Breast epithelium (tissue), 4 donors: ENCODE measurements at regions of chr1 and their contacts with region 1.

Region 1: GRCh38 chr1:9494929-9495758 is 44.1 kb upstream of the SLC25A33 start:
- DNase-seq: peak in 1 of 2 donors; percentile 61
- H3K4me3 ChIP-seq: peak overlapping the region in 2 of 3 donors; percentile 33 to 56
- H3K27ac ChIP-seq: no peak overlapping the region
- H3K4me1 ChIP-seq: peaks cover 0 to 3% of the 10 kb centered on the region in 2 donors
- H3K27me3 ChIP-seq: no peaks in the 10 kb centered on the region
- CTCF ChIP-seq: peak; percentile 92 to 97 (median 94)
- POLR2A ChIP-seq: no peak

Region 2: GRCh38 chr1:9289090-9289534 is 206.0 kb before region 1 on chr1:
- intact Hi-C with region 1: loop called (anchors 10 kb)
- DNase-seq: peak; percentile 70 to 80
- H3K4me3 ChIP-seq: no peak overlapping the region
- H3K27ac ChIP-seq: peak overlapping the region; percentile 16 to 43
- H3K4me1 ChIP-seq: peaks cover 0 to 3% of the 10 kb centered on the region in 2 donors
- H3K27me3 ChIP-seq: no peaks in the 10 kb centered on the region
- CTCF ChIP-seq: peak; percentile 95 to 96 (median 96)
- POLR2A ChIP-seq: no peak

Region 3: GRCh38 chr1:9529190-9529589 is 34.0 kb after region 1 on chr1:
- intact Hi-C with region 1: no loop called
- DNase-seq: no peak
- H3K4me3 ChIP-seq: no peak overlapping the region
- H3K27ac ChIP-seq: peak overlapping the region in 1 of 2 donors; percentile 23
- H3K4me1 ChIP-seq: no peaks in the 10 kb centered on the region
- H3K27me3 ChIP-seq: no peaks in the 10 kb centered on the region
- CTCF ChIP-seq: no peak
- POLR2A ChIP-seq: no peak

Region 4: DNA sequence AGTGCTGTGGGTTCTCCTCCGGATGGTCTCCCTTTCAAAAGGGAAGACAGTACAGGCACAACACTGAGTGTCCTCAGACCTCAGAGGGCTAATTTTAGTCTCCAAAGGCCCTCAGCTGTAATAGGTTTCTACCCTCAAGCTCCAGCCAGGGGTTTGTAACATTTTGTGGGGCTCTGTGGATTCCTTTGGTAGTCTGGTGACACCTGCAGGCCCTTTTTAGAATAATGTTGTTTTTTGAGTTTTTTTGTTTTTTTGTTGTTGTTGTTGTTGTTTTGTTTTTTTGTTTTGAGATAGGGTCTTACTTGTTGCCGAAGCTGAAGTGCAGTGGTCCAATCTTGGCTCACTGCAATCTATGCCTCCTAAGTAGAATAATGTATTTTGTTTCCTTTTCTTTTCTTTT is 78.6 kb after region 1 on chr1:
- intact Hi-C with region 1: loop called (anchors 10 kb)
- DNase-seq: no peak
- H3K4me3 ChIP-seq: no peak overlapping the region
- H3K27ac ChIP-seq: no peak overlapping the region
- H3K4me1 ChIP-seq: no peaks in the 10 kb centered on the region
- H3K27me3 ChIP-seq: no peaks in the 10 kb centered on the region
- CTCF ChIP-seq: peak in 2 of 3 donors; percentile 40 to 48
- POLR2A ChIP-seq: no peak

Region 5: GRCh38 chr1:9984253-9984652 is 489.1 kb after region 1 on chr1:
- intact Hi-C with region 1: loop called (anchors 5 kb)
- DNase-seq: no peak
- H3K4me3 ChIP-seq: no peak overlapping the region
- H3K27ac ChIP-seq: peak overlapping the region in 1 of 2 donors; percentile 48
- H3K4me1 ChIP-seq: no peaks in the 10 kb centered on the region
- H3K27me3 ChIP-seq: no peaks in the 10 kb centered on the region
- CTCF ChIP-seq: no peak
- POLR2A ChIP-seq: no peak